Right ventricle myocardium inferior (tissue), 1 donor: ENCODE measurements at regions of chr1 and their contacts with region 1.

Region 1: DNA sequence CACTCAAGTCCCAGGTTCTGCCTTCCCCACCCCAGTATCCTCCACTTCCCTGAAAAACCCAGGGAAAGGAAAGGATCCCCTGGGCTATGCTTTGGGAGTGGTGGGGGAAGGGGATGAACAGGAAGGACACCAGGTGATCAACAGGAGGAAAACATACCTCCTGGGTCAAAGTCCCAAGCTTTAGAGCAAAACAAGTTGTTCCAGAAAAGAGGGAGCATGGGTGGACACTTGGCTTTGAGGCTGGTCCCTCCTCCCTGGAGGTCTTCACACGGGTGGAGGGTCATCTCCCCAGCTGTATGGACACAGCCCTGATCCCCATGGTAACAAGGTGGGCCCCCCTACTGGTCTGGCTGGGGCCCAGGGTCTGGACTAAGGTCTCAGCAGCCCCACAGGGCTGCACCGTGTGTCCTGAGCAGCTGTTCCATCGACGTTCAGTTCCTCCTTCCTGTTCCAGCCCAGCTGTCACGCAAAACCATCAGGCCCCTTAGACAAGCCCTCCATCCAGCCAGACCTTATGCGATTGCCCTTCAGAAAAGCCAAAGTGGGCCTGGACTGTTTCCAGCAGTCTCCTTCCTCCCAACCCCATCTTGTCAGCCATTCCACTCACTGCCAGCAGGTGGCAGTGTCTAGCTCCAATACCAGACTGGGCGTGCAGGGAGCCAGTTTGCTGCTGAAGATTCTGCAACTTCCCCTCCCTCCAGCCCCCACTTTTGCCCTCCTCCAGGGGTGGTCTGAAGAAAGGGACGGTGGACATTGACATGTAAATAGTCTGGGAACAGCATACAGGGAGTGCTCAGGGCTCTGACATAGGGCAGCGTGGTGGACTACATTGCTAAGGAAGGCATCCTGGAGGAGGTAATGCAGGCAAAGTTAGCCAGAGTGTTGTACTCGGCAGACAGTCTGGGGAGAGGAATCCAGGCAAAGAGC is 2.9 kb upstream of the PDZK1IP1 start:
- DNase-seq: peak; percentile 85
- ATAC-seq: peak; percentile 38

Region 2: DNA sequence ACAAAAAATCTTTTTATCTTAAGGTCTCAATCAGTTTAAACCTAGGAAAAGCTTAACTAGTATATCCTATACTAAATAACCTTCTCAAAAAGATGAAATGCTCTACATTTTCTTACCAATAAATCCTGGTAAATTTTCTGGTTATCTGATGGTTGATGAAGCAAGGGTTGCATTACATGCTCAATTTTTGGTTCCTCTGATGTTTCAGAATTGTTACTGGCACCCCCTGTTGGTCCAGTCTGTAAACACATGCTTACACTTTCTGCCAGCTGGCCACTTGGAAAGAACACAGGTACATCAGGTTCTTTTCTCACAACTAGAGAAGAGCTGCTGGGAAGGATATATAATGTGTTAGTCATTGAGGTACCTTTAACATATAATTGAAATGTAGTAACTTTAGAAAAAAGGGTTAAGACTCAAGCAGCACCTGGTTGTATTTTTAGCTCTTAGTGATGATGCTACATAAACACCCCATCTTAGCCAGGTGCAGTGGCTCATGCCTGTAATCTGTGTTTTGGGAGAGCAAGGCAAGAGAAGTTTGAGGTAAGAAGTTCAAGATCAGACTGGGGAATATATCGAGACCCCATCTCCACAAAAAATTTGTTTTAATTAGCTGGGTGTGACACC is 70.2 kb after region 1 on chr1:
- intact Hi-C with region 1: loop called (anchors 2 kb)
- DNase-seq: no peak
- ATAC-seq: no peak

Region 3: DNA sequence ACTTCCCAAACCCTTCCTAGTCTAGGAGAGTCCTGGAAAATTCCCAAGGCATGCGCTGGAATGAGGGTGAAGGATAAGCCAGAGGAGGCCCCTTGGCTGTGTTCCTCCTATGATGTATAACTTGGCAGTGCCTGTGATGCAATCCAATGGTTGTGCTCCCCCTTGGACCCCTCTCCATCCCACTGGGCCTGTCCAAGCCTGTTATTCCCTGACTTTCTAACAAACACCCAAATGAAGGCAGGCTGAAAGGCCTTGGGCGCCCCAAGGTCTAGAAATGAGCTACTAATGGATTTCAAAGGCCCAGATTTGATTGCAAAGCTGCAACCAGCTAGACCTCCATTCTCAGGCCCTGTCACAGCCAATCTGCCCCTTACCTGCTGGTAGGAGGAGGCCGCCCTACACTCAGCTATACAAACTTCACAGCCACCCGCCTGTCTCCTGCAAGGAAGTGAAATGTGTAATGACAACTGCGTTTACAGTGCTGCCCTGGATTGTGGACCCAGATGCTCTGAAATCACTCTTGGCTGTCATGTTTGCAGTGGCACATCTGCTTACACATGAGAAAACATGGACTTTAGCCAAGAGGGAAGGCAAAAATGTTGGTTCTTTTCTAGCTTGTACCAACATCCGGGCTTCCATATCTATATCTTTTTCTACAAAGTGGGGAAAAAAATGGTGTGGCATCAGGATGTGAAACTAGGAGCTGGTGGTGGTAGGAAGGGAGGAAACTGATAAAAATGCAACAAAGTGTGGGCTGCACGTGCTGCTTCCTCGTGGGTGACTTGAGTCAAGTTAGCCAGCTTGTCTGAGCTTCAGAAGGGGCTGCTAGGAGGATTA is 674.1 kb after region 1 on chr1:
- intact Hi-C with region 1: no loop called
- DNase-seq: no peak
- ATAC-seq: no peak